Naive thymus-derived CD4-positive, alpha-beta T cell (primary cell): ENCODE measurements at regions of chr18 and their contacts with region 1.

Region 1: GRCh38 chr18:5456577-5457463 is 87.0 kb downstream of the EPB41L3 start:
- DNase-seq: peak in 6 of 9 donors; percentile 10 to 50 (median 33)
- ATAC-seq: peak; percentile 86
- H3K4me3 ChIP-seq: no peak overlapping the region
- H3K4me3 Mint-ChIP-seq: peak overlapping the region in 9 of 10 donors; percentile 63 to 87 (median 73)
- H3K27ac ChIP-seq: peak overlapping the region; percentile 66
- H3K27ac Mint-ChIP-seq: peak overlapping the region in 8 of 9 donors; percentile 82 to 97 (median 86)
- H3K4me1 ChIP-seq: peaks cover 0 to 3% of the 10 kb centered on the region in 2 donors
- H3K4me1 Mint-ChIP-seq: peaks cover 0 to 35% (median 25%) of the 10 kb centered on the region in 7 donors
- H3K27me3 ChIP-seq: no peaks in the 10 kb centered on the region
- H3K27me3 Mint-ChIP-seq: peaks cover 0 to 5% (median 0%) of the 10 kb centered on the region in 5 donors

Region 2: DNA sequence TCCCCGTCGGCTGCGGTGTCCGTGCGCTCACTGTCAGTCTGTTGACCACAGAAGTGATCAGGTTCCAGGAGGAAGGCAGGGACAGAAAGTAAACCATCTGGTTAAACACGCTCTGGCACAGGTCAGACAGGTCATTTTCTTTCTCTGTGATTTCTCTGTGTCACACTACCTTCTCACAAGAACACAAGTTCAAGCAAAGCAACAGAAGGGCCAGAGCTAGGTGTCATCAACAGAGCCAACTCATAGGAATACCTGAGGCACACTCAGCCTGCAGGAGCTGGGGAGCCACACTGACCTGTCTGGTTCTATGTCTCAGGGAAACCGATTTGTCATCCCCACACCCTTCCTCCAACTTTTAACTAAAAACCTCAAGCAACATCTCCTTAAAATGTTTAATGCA is 46.2 kb before region 1 on chr18:
- CTCF ChIA-PET with region 1: no interaction called
- POLR2A ChIA-PET with region 1: no interaction called
- intact Hi-C with region 1: no loop called
- DNase-seq: no peak
- ATAC-seq: no peak
- H3K4me3 ChIP-seq: no peak overlapping the region
- H3K4me3 Mint-ChIP-seq: no peak overlapping the region
- H3K27ac ChIP-seq: no peak overlapping the region
- H3K27ac Mint-ChIP-seq: no peak overlapping the region
- H3K4me1 ChIP-seq: no peaks in the 10 kb centered on the region
- H3K4me1 Mint-ChIP-seq: peaks cover 0 to 3% (median 0%) of the 10 kb centered on the region in 7 donors
- H3K27me3 ChIP-seq: no peaks in the 10 kb centered on the region
- H3K27me3 Mint-ChIP-seq: peaks cover 0 to 13% (median 4%) of the 10 kb centered on the region in 5 donors

Region 3: DNA sequence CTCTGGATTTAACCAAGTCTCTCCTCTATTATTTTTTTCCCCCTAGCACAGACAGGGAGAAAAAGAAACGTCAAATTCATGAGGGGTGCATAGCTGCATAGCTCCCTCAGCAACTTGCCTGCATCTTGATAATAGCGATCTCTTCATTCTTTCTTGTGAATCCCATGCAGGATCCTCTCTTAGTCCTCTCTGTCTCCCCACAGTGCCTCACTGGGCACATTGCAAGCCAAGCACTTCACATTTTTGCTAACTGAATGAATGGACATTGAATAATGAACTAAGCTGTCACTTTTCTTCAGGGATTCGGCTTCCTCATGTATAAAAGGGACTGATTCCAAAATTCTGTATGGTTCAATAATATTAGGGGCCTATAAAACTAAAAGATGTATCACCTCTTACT is 89.8 kb after region 1 on chr18:
- CTCF ChIA-PET with region 1: interaction called, 3 read pairs
- POLR2A ChIA-PET with region 1: interaction called, 10 read pairs
- intact Hi-C with region 1: loop called in 1 of 2 experiments (anchors 1 kb)
- DNase-seq: peak in 3 of 9 donors; percentile 7 to 26 (median 16)
- ATAC-seq: peak; percentile 56
- H3K4me3 ChIP-seq: no peak overlapping the region
- H3K4me3 Mint-ChIP-seq: no peak overlapping the region
- H3K27ac ChIP-seq: no peak overlapping the region
- H3K27ac Mint-ChIP-seq: no peak overlapping the region
- H3K4me1 ChIP-seq: no peaks in the 10 kb centered on the region
- H3K4me1 Mint-ChIP-seq: peaks cover 3 to 15% (median 8%) of the 10 kb centered on the region in 7 donors
- H3K27me3 ChIP-seq: no peaks in the 10 kb centered on the region
- H3K27me3 Mint-ChIP-seq: peaks cover 34 to 50% (median 43%) of the 10 kb centered on the region in 5 donors

Region 4: DNA sequence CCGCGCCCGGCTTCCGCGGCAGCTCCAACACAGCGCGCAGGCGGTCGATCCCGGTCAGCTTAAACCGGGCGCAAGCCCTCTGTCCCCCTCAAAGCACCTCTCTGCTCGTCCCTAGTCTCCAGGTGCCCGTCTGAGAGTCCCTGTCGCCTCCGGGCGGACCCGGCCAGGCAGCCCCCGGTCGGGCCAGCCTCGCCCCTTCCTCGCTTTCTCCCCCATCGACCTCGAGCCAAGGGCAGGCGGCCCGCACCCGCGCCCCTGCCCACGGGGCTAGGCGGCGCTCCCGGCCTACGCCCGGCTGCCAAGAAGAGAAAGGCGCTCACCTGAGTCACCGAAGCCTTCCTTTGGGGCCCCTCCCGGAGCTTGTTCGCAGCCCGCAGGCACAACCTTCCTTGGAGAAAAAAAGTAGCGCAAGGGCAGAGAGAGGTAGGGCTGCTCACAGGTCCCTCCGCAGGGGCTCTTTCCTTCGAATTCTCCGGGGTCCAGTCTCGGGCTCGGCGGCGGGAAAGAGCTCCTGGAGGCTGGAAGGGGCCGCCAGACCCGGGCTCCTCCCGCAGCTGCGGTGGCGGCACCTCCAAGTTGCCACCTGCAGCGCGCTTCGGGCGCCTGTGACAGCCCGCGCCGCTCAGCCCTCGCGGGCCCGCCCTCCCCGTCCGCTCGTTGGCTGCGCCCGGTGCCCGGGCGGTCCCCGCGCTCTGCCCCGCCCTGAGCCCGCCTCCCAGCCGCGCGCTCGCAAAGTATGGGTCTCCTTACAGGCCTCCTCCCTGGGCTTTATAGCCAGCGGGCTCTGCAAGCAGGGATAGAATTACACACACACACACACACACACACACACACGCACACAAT is 173.5 kb after region 1 on chr18:
- CTCF ChIA-PET with region 1: no interaction called
- POLR2A ChIA-PET with region 1: no interaction called
- intact Hi-C with region 1: loop called in 1 of 2 experiments (anchors 10 kb)
- DNase-seq: peak in 7 of 9 donors; percentile 17 to 59 (median 30)
- ATAC-seq: peak; percentile 89
- H3K4me3 ChIP-seq: no peak overlapping the region
- H3K4me3 Mint-ChIP-seq: peak overlapping the region in 6 of 10 donors; percentile 65 to 93 (median 74)
- H3K27ac ChIP-seq: no peak overlapping the region
- H3K27ac Mint-ChIP-seq: no peak overlapping the region
- H3K4me1 ChIP-seq: peaks cover 0 to 5% of the 10 kb centered on the region in 2 donors
- H3K4me1 Mint-ChIP-seq: peaks cover 0 to 12% (median 7%) of the 10 kb centered on the region in 7 donors
- H3K27me3 ChIP-seq: peaks cover 0 to 3% of the 10 kb centered on the region in 2 donors
- H3K27me3 Mint-ChIP-seq: peaks cover 23 to 45% (median 36%) of the 10 kb centered on the region in 5 donors

Region 5: DNA sequence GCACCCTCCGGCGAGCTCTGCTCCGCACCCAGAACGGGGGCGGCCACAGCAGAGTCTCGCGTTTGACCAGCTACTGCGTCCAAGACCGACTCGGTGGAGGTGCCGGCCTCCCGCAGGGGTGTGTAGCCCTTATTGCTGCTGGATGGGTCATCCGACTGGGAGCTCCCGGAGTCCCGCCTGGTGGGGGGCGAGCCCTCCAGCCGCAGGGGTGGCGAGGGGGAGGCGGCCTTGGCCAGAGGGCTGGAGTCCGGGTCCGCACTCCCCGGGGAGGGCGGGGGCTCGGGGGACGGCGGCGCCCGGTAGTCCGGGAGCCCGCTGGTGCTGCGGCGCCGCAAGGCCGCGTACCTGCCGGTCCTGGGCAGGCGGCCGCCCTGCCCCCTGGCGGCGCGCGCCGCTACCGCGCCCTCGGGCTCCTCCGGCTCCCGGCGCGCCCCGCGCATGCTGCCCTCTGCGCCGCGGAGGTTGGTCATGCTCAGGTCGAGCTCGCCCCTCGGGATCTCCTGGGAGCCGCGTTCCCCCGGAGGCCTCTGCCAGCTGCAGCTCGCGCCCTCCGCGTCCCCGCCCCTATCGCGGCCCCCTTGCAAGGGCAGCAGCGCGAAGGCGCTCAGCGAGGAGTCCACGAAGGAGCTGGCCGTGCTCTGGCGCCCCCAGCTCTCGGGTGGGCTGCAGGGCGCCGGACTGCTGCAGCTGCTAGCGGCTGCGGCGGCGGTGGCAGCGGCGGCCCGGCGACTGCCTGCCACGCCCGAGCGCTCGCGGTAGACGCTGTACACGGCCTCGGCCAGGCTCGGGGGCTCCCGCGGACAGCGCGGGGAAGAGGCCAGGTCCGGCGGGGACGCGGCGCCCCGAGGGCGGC is 433.7 kb after region 1 on chr18:
- CTCF ChIA-PET with region 1: no interaction called
- POLR2A ChIA-PET with region 1: no interaction called
- intact Hi-C with region 1: loop called in 1 of 2 experiments (anchors 2 kb)
- DNase-seq: peak in 6 of 9 donors; percentile 11 to 32 (median 24)
- ATAC-seq: peak; percentile 77
- H3K4me3 ChIP-seq: no peak overlapping the region
- H3K4me3 Mint-ChIP-seq: peak overlapping the region in 7 of 10 donors; percentile 7 to 78 (median 27)
- H3K27ac ChIP-seq: no peak overlapping the region
- H3K27ac Mint-ChIP-seq: no peak overlapping the region
- H3K4me1 ChIP-seq: peaks cover 0 to 4% of the 10 kb centered on the region in 2 donors
- H3K4me1 Mint-ChIP-seq: peaks cover 0 to 23% (median 12%) of the 10 kb centered on the region in 7 donors
- H3K27me3 ChIP-seq: peaks cover 3% of the 10 kb centered on the region in 2 donors
- H3K27me3 Mint-ChIP-seq: peaks cover 60 to 70% (median 63%) of the 10 kb centered on the region in 5 donors